Activated B cell treated with CpG ODN at 0.5 μM for 24 hours (primary cell): ENCODE measurements at regions of chr17 and their contacts with region 1.

Region 1: DNA sequence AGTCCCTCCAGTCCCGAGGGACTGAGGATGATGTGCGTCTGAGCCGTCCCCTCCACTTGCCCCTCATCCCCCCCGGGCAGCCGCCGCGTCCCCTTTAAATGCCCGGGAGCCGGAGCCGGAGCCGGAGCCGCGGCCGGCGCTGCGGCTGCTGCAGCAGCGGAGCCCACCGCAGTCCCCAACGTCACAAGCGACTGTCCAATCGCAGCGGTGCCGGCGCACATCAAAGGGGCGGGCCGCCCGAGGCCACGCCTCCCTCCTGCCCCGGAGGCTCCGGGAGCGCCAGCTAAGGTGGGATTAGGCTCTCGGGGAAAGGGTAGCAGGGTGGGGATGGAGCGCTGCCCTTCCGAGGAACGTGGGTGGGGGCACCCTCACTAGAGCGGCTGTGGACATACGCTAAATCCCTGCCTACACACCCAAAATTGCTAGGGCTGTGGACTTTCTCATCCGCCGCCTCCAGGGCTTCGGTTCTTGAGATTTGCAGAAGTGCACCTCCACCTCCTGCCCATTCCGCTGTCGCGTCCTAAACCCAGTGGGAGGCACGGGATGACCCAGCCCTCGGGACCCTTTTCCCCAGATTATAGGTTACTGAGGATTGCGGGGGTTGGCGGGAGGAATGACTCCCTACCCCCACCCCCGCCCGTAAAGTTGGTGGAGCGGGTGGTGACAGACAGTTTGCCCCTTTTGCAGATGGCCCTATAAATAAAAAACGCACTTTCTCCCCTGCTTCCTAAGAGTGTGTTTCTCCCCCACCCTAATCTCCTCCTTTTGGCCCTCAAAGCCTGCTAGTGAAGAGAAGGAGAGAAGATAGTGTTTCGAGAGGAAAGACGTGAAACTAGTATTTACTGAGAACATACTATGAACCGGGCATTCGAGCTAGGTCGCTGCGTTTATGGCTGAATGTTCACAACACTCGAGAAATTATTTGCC is at the start of gene PHOSPHO1:
- DNase-seq: peak; percentile 89
- ATAC-seq: peak; percentile 94
- H3K4me3 Mint-ChIP-seq: peak within 1 kb of the TSS; percentile 80
- H3K27ac Mint-ChIP-seq: no peak within 1 kb of the TSS
- H3K4me1 Mint-ChIP-seq: peaks cover 17% of the 10 kb centered on the region
- H3K27me3 Mint-ChIP-seq: peaks cover 7% of the 10 kb centered on the region
- CTCF ChIP-seq: no peak
- total RNA-seq, gene PHOSPHO1: 0.59 TPM in 1 of 2 replicates, not detected in the other

Region 2: DNA sequence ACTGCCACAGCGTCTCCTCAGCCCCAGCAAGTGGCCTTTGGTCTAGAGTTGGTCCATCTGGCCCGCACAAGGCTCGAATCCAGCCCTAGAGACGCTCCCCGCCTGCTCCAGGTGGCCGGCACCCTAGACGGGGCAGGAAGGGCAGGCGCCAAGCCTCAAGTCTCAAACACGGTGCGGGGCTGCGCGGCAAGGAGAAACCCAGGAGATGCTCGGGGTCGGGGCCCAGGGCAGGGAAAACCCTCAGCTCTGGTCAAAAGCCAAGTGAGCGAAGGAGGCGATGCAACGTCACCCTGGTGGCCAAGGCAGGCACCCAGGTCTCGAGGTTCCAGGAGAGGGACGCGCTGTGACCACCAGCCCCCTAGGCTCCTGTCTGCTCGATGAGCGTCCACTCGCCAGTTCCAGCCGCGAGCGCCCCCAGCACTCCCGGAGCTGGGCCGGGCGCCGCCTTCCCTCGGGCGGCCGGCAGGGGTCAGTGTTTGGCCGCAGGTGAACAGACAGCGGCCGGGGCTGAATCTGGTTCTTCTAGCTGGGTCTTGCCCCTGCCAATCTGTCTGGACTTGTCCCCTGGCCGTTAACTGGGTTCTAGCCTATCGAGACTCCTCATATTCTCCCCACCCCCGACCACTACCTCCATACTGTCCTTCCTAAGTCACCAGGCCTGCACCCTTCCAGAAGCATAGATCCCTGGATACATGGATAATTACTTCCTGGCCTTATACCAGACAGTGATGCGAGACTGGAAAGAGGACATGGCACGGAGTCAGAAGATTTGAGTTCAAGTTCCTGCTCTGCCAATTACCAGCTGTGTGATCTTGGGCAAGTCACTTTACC is 552.5 kb before region 1 on chr17:
- CTCF ChIA-PET with region 1: interaction called, 3 read pairs
- POLR2A ChIA-PET with region 1: no interaction called
- intact Hi-C with region 1: loop called (anchors 10 kb)
- DNase-seq: peak; percentile 67
- ATAC-seq: peak; percentile 92
- H3K4me3 Mint-ChIP-seq: peak overlapping the region; percentile 35
- H3K27ac Mint-ChIP-seq: no peak overlapping the region
- H3K4me1 Mint-ChIP-seq: peaks cover 2% of the 10 kb centered on the region
- H3K27me3 Mint-ChIP-seq: peaks cover 34% of the 10 kb centered on the region
- CTCF ChIP-seq: peak; percentile 88

Region 3: GRCh38 chr17:49132699-49133364 is 98.1 kb before region 1 on chr17 and contains the start of gene B4GALNT2:
- CTCF ChIA-PET with region 1: interaction called, 3 read pairs
- POLR2A ChIA-PET with region 1: no interaction called
- intact Hi-C with region 1: loop called (anchors 5 kb)
- DNase-seq: no peak
- ATAC-seq: no peak
- H3K4me3 Mint-ChIP-seq: peak within 1 kb of the TSS; percentile 48
- H3K27ac Mint-ChIP-seq: no peak within 1 kb of the TSS
- H3K4me1 Mint-ChIP-seq: peaks cover 10% of the 10 kb centered on the region
- H3K27me3 Mint-ChIP-seq: peaks cover 53% of the 10 kb centered on the region
- CTCF ChIP-seq: no peak
- total RNA-seq, gene B4GALNT2: 0.05 and 0.09 TPM in 2 replicates

Region 4: GRCh38 chr17:49210158-49211029 is 20.5 kb before region 1 on chr17 and contains the starts of genes ABI3 and GNGT2:
- CTCF ChIA-PET with region 1: interaction called, 6 read pairs
- POLR2A ChIA-PET with region 1: interaction called, 9 read pairs
- intact Hi-C with region 1: loop called (anchors 1 kb)
- DNase-seq: peak; percentile 64
- ATAC-seq: peak; percentile 96
- H3K4me3 Mint-ChIP-seq: peak within 1 kb of the TSS; percentile 84
- H3K27ac Mint-ChIP-seq: peak within 1 kb of the TSS; percentile 87
- H3K4me1 Mint-ChIP-seq: peaks cover 64% of the 10 kb centered on the region
- H3K27me3 Mint-ChIP-seq: no peaks in the 10 kb centered on the region
- CTCF ChIP-seq: no peak
- total RNA-seq, gene ABI3: 6.5 and 9.7 TPM in 2 replicates
- total RNA-seq, gene GNGT2: 8.1 and 9.8 TPM in 2 replicates

Region 5: GRCh38 chr17:49260011-49260921 is 29.4 kb after region 1 on chr17:
- CTCF ChIA-PET with region 1: no interaction called
- POLR2A ChIA-PET with region 1: no interaction called
- intact Hi-C with region 1: loop called (anchors 2 kb)
- DNase-seq: peak; percentile 53
- ATAC-seq: peak; percentile 77
- H3K4me3 Mint-ChIP-seq: peak overlapping the region; percentile 83
- H3K27ac Mint-ChIP-seq: no peak overlapping the region
- H3K4me1 Mint-ChIP-seq: peaks cover 11% of the 10 kb centered on the region
- H3K27me3 Mint-ChIP-seq: peaks cover 9% of the 10 kb centered on the region
- CTCF ChIP-seq: no peak

Region 6: GRCh38 chr17:49390548-49391324 is 159.8 kb after region 1 on chr17:
- CTCF ChIA-PET with region 1: no interaction called
- POLR2A ChIA-PET with region 1: no interaction called
- intact Hi-C with region 1: loop called (anchors 5 kb)
- DNase-seq: peak; percentile 29
- ATAC-seq: peak; percentile 51
- H3K4me3 Mint-ChIP-seq: peak overlapping the region; percentile 77
- H3K27ac Mint-ChIP-seq: peak overlapping the region; percentile 98
- H3K4me1 Mint-ChIP-seq: peaks cover 77% of the 10 kb centered on the region
- H3K27me3 Mint-ChIP-seq: no peaks in the 10 kb centered on the region
- CTCF ChIP-seq: no peak

Region 7: DNA sequence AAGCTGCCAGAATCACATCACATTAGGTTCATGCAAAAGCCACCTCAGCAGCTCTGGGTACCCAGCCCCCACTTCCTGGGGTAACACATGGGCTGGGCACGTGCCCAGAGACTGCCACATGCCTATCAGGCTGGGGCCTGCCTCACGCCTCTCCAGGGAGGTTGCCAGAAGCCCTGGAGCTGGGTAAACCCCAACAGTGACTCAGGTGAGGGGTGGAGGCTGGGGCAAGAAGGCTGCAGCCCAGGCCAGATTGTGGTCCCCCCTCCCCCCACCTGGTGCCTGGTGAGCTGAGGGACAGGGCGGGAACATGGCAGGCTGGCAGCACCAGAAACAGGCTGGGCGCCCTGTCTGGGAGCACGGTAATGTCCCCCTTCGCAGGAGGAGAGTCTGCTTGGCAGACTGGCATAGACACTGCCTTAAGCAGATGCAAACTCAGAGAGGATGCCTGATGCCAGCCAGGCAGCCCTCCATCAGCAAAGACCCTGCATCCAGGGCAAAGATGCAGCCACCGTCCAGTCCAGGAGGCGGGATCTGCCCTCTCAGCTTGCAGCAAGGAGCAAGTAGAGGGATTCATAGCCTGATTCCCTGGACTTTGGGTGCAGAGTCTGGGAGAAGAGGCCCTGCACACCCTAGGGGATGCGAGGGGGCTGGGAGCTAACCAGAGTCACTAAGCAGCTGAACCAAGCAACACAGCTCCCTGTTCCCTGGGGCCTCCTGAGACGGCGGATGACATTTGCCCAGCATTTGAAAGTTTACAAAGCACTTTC is 293.0 kb after region 1 on chr17:
- CTCF ChIA-PET with region 1: no interaction called
- POLR2A ChIA-PET with region 1: no interaction called
- intact Hi-C with region 1: no loop called
- DNase-seq: no peak
- ATAC-seq: peak; percentile 62
- H3K4me3 Mint-ChIP-seq: no peak overlapping the region
- H3K27ac Mint-ChIP-seq: no peak overlapping the region
- H3K4me1 Mint-ChIP-seq: peaks cover 2% of the 10 kb centered on the region
- H3K27me3 Mint-ChIP-seq: peaks cover 22% of the 10 kb centered on the region
- CTCF ChIP-seq: no peak

Region 8: DNA sequence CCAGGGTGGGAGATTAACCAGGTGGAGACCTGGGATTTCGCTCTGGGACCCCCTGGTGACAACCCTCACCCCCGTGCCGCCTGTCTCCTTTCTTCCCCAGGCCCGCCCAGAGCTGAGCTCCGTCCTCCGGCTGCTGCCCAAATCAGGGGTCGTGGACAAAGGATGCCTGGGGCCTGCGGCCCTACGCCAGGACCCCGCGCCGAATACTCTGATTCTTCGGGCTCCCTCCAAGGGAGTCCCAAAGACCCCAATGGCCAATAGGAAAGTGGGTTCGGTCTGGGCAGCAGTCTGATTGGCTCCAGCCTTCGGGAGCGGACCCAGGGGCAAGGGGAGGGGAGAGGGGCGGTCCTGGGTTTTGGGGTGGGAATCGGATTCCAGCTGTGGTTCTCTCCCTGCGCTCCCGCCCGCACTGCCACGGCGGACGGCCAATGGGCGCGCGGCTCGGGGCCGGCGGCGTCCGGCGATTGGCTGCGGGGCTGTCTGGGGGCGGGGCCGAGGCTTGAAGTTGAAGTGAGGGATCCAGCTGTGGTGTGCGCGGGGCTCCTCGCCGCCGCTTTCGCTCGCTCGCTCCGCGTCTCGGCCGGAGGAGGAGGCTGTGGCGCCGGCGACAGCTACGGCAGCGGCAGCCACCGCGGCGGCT is 1329.4 kb after region 1 on chr17 and contains the start of gene CACNA1G:
- CTCF ChIA-PET with region 1: no interaction called
- POLR2A ChIA-PET with region 1: no interaction called
- intact Hi-C with region 1: no loop called
- DNase-seq: peak; percentile 86
- ATAC-seq: peak; percentile 90
- H3K4me3 Mint-ChIP-seq: peak within 1 kb of the TSS; percentile 84
- H3K27ac Mint-ChIP-seq: no peak within 1 kb of the TSS
- H3K4me1 Mint-ChIP-seq: peaks cover 29% of the 10 kb centered on the region
- H3K27me3 Mint-ChIP-seq: peaks cover 37% of the 10 kb centered on the region
- CTCF ChIP-seq: no peak
- total RNA-seq, gene CACNA1G: 0.07 TPM in 1 of 2 replicates, not detected in the other